BJ (cell line): ENCODE measurements at regions of chr3 and their contacts with region 1.

Region 1: GRCh38 chr3:37210230-37210629 is 35.8 kb upstream of the LRRFIP2 start:
- DNase-seq: peak; percentile 64
- H3K4me3 ChIP-seq: no peak overlapping the region
- H3K27me3 ChIP-seq: no peaks in the 10 kb centered on the region
- CTCF ChIP-seq: no peak

Region 2: DNA sequence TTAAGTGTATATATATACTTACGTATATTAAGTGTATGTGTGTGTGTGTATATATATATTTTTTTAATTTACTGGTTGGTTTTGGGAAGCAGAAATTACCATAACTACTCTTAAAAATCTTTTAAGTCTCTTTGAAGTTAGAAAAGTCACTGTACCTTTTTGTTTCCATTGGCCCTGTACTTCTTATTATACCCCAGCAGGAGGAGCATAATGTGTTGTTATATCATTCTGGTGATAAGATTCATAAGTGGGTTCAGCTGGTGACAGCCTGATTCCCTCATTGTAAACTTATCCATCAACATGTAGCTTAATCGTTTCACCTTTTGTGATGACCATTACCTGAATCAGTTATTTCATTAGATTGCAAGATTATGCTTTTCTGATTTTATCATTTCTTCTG is 186.1 kb before region 1 on chr3:
- CTCF ChIA-PET with region 1: interaction called, 23 read pairs
- POLR2A ChIA-PET with region 1: no interaction called
- DNase-seq: no peak
- H3K4me3 ChIP-seq: no peak overlapping the region
- H3K27me3 ChIP-seq: no peaks in the 10 kb centered on the region
- CTCF ChIP-seq: peak; percentile 38

Region 3: GRCh38 chr3:37182816-37183215 is 27.4 kb before region 1 on chr3:
- CTCF ChIA-PET with region 1: interaction called, 3 read pairs
- POLR2A ChIA-PET with region 1: interaction called, 10 read pairs
- DNase-seq: no peak
- H3K4me3 ChIP-seq: no peak overlapping the region
- H3K27me3 ChIP-seq: no peaks in the 10 kb centered on the region
- CTCF ChIP-seq: no peak

Region 4: DNA sequence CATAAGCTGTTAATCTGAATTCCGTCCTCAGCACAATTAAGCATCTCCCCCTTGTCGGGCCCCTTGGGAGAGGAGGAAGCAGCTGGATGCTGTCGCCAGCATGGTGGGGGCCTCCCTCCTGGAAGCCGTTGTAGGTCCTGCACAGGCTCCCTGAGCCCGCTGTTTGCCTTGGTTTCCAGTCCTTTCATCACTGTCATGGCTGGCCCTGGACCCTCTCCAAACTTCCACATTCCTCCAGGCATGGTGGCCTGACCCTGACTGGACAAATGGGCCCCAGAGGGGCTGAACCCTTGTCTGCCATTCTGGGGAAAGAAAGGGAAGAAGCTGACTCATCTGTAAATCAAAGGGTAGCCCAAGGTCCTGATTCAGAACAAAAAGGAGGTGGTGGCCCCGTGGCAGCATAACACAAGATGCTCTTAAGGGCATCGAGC is 264.7 kb after region 1 on chr3:
- CTCF ChIA-PET with region 1: no interaction called
- POLR2A ChIA-PET with region 1: no interaction called
- DNase-seq: no peak
- H3K4me3 ChIP-seq: no peak overlapping the region
- H3K27me3 ChIP-seq: peaks cover 3% of the 10 kb centered on the region
- CTCF ChIP-seq: no peak